Gastrocnemius medialis (tissue), 4 donors: ENCODE measurements at regions of chr9 and their contacts with region 1.

Region 1: DNA sequence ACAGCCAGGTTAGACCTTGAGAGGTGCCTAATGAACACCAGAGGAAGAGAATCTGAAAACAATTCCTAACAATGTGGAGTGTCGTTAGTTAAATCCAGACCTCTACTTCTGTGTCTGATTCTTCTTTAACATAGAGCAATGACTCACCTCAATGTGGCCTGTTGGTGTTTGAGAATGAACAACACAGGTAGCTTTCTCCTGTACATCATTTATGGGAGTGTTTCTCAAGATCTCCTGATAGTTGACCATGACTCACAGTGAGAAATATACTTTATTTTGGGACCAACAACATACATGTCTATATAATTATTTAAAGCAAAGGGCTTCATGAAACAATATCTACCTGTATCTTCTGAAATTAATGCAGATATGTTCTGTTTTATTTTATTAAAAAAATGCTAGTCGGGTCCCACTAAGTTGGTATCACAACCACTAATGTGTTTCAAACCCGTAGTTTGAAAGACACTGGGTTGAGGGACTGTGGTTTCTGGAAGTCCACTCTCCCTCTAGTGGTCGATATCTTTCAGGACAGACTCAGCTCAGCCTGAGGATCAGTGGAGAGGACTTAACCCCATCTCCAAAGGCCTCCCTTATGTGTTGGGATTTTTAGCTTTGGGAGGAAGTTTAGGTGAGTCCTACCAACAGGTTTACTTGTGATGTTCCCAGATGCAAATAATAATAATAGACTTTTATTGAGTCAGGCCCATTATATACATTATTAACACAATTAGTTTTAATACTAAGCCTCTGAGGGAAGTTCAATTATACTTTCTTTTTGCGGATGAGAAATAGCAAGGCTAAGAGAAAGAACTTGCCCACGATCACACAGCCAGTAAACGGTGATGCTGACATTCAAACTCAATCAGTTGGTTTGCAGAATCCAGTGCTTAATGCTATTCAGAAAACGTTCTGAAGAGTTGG is 70.0 kb upstream of the KLF9 start:
- DNase-seq: peak; percentile 56 to 69
- ATAC-seq: peak; percentile 63 to 64
- H3K4me3 ChIP-seq: no peak overlapping the region
- H3K27ac ChIP-seq: peak overlapping the region; percentile 97 to 99 (median 98)
- H3K4me1 ChIP-seq: peaks cover 82 to 90% of the 10 kb centered on the region in 2 donors
- H3K27me3 ChIP-seq: no peaks in the 10 kb centered on the region
- CTCF ChIP-seq: peak; percentile 79 to 86 (median 81)
- POLR2A ChIP-seq: peak in 1 of 2 donors; percentile 26

Region 2: GRCh38 chr9:69385581-69386033 is 1098.9 kb before region 1 on chr9:
- in situ Hi-C with region 1: no loop called
- intact Hi-C with region 1: loop called (anchors 10 kb)
- DNase-seq: no peak
- ATAC-seq: no peak
- H3K4me3 ChIP-seq: no peak overlapping the region
- H3K27ac ChIP-seq: peak overlapping the region; percentile 63 to 98 (median 96)
- H3K4me1 ChIP-seq: peaks cover 37 to 38% of the 10 kb centered on the region in 2 donors
- H3K27me3 ChIP-seq: no peaks in the 10 kb centered on the region
- CTCF ChIP-seq: no peak
- POLR2A ChIP-seq: no peak

Region 3: GRCh38 chr9:70205367-70206032 is 279.0 kb before region 1 on chr9:
- in situ Hi-C with region 1: no loop called
- intact Hi-C with region 1: no loop called
- DNase-seq: no peak
- ATAC-seq: no peak
- H3K4me3 ChIP-seq: no peak overlapping the region
- H3K27ac ChIP-seq: no peak overlapping the region
- H3K4me1 ChIP-seq: no peaks in the 10 kb centered on the region
- H3K27me3 ChIP-seq: no peaks in the 10 kb centered on the region
- CTCF ChIP-seq: no peak
- POLR2A ChIP-seq: no peak

Region 4: GRCh38 chr9:70340572-70340971 is 143.9 kb before region 1 on chr9:
- in situ Hi-C with region 1: loop called in 1 of 4 experiments (anchors 5 kb)
- intact Hi-C with region 1: no loop called
- DNase-seq: no peak
- ATAC-seq: no peak
- H3K4me3 ChIP-seq: no peak overlapping the region
- H3K27ac ChIP-seq: no peak overlapping the region
- H3K4me1 ChIP-seq: no peaks in the 10 kb centered on the region
- H3K27me3 ChIP-seq: no peaks in the 10 kb centered on the region
- CTCF ChIP-seq: peak; percentile 39 to 64 (median 58)
- POLR2A ChIP-seq: no peak

Region 5: GRCh38 chr9:70413798-70414775 is 70.4 kb before region 1 on chr9 and contains the start of gene KLF9:
- in situ Hi-C with region 1: loop called (anchors 5 kb)
- intact Hi-C with region 1: loop called (anchors 1 kb)
- DNase-seq: peak; percentile 98 to 99
- ATAC-seq: peak; percentile 57 to 61
- H3K4me3 ChIP-seq: peak within 1 kb of the TSS; percentile 76 to 99 (median 96)
- H3K27ac ChIP-seq: peak within 1 kb of the TSS; percentile 92 to 100 (median 100)
- H3K4me1 ChIP-seq: peaks cover 46 to 52% of the 10 kb centered on the region in 2 donors
- H3K27me3 ChIP-seq: no peaks in the 10 kb centered on the region
- CTCF ChIP-seq: no peak
- POLR2A ChIP-seq: no peak
- total RNA-seq, gene KLF9: 122 to 174 (median 169) TPM

Region 6: GRCh38 chr9:70504834-70505233 is 20.4 kb after region 1 on chr9:
- in situ Hi-C with region 1: no loop called
- intact Hi-C with region 1: no loop called
- DNase-seq: no peak
- ATAC-seq: no peak
- H3K4me3 ChIP-seq: no peak overlapping the region
- H3K27ac ChIP-seq: peak overlapping the region in 3 of 4 donors; percentile 6 to 57 (median 51)
- H3K4me1 ChIP-seq: peaks cover 21 to 35% of the 10 kb centered on the region in 2 donors
- H3K27me3 ChIP-seq: no peaks in the 10 kb centered on the region
- CTCF ChIP-seq: no peak
- POLR2A ChIP-seq: no peak

Region 7: GRCh38 chr9:70587201-70587600 is 102.7 kb after region 1 on chr9:
- in situ Hi-C with region 1: loop called in 1 of 4 experiments (anchors 10 kb)
- intact Hi-C with region 1: no loop called
- DNase-seq: peak; percentile 47 to 53
- ATAC-seq: peak; percentile 92 to 94
- H3K4me3 ChIP-seq: no peak overlapping the region
- H3K27ac ChIP-seq: peak overlapping the region; percentile 82 to 89 (median 84)
- H3K4me1 ChIP-seq: peaks cover 37 to 46% of the 10 kb centered on the region in 2 donors
- H3K27me3 ChIP-seq: no peaks in the 10 kb centered on the region
- CTCF ChIP-seq: no peak
- POLR2A ChIP-seq: no peak